ENCODE measurements at regions of chr12 and their contacts with region 1.

Region 1: DNA sequence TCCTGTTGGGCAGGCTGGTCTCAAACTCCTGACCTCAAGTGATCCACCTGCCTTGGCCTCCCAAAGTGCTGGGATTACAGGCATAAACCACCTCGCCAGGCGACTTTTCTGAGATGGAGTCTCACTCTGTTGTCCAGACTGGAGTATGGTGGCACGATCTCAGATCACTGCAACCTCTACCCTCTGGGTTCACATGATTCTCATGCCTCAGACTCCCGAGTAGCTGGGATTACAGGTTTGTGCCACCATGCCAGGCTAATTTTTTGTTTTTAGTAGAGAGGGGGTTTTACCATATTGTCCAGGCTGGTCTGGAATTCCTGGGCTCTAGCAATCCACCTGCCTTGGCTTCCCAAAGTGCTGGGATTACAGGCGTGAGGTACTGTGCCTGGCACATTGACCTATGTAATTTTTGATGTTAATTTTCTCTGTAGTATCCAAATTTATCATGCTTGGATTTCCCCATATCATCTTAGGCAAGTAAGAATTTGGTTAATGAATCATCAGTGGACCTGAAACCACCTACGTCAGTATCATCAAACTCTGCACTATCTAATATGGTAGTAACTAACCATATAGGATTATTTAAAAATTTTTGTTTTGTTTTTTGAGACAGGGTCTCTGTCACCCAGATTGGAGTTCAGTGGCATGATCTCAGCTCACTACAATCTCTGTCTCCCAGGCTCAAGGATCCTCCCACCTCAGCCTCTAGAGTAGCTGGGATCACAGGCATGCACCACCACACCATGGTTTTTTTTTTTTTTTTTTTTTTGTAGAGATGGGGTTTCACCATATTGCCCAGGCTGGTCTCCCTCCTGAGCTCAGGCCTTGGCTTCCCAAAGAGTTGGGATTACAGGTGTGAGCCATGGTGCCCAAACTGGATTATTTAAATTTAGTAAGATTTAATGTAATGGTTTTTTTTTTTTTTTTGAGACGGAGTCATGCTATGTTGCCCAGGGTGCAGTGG is 11.9 kb upstream of the ATP5F1B start:
- DNase-seq: no peak
- ATAC-seq: peak; percentile 94
- H3K4me3 Mint-ChIP-seq: no peak overlapping the region
- H3K27ac Mint-ChIP-seq: peak overlapping the region; percentile 72
- H3K4me1 Mint-ChIP-seq: peaks cover 16% of the 10 kb centered on the region
- H3K27me3 Mint-ChIP-seq: no peaks in the 10 kb centered on the region

Region 2: GRCh38 chr12:56062996-56063395 is 594.7 kb before region 1 on chr12:
- CTCF ChIA-PET with region 1: no interaction called
- POLR2A ChIA-PET with region 1: no interaction called
- intact Hi-C with region 1: no loop called
- DNase-seq: no peak
- ATAC-seq: no peak
- H3K4me3 Mint-ChIP-seq: no peak overlapping the region
- H3K27ac Mint-ChIP-seq: no peak overlapping the region
- H3K4me1 Mint-ChIP-seq: peaks cover 3% of the 10 kb centered on the region
- H3K27me3 Mint-ChIP-seq: peaks cover 4% of the 10 kb centered on the region

Region 3: GRCh38 chr12:56178347-56178746 is 479.4 kb before region 1 on chr12:
- CTCF ChIA-PET with region 1: no interaction called
- POLR2A ChIA-PET with region 1: no interaction called
- intact Hi-C with region 1: no loop called
- DNase-seq: no peak
- ATAC-seq: no peak
- H3K4me3 Mint-ChIP-seq: no peak overlapping the region
- H3K27ac Mint-ChIP-seq: no peak overlapping the region
- H3K4me1 Mint-ChIP-seq: no peaks in the 10 kb centered on the region
- H3K27me3 Mint-ChIP-seq: no peaks in the 10 kb centered on the region

Region 4: DNA sequence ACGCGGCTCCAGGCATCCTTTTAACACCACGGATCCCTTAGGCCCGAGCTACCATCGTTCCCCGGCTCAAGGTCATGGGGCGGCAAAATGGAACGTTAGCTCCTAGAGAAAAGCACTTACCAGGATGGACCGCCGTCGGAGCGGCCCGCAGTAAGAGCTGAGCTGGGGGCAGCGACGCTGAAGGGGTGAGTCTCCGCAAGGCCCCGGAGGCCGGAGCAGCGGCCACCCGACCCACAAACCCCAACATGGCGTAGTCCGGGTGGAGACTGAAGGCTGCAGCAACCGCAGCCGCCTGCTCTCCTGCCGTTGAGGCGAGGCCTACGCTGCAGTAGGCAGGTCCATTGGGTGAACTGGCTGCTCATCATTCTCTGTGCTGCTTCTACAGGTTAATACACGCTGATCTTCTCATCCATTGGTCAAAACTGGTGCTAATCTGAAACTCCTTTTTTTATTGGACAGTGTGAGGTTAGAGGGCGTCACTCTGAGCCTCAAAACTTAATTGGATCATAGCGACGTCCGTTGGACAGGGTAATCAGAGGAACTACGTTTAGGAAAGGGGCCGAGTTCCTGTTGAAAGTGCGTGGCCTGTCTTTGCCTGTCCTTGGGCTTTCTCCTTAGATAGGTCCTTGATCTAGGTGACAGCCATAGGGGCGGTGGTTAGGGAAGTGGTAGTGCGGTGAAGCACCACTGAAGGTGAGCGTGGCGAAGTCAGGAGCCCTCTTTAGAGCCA is 11.8 kb before region 1 on chr12 and contains the start of gene ATP5F1B:
- CTCF ChIA-PET with region 1: interaction called, 5 read pairs
- POLR2A ChIA-PET with region 1: interaction called, 3 read pairs
- intact Hi-C with region 1: loop called (anchors 1 to 2 kb)
- DNase-seq: peak; percentile 95
- ATAC-seq: peak; percentile 99
- H3K4me3 Mint-ChIP-seq: peak within 1 kb of the TSS; percentile 95
- H3K27ac Mint-ChIP-seq: peak within 1 kb of the TSS; percentile 95
- H3K4me1 Mint-ChIP-seq: peaks cover 30% of the 10 kb centered on the region
- H3K27me3 Mint-ChIP-seq: no peaks in the 10 kb centered on the region
- total RNA-seq, gene ATP5F1B: 756 to 818 TPM

Region 5: GRCh38 chr12:56908136-56908535 is 250.4 kb after region 1 on chr12:
- CTCF ChIA-PET with region 1: no interaction called
- POLR2A ChIA-PET with region 1: no interaction called
- intact Hi-C with region 1: no loop called
- DNase-seq: no peak
- ATAC-seq: no peak
- H3K4me3 Mint-ChIP-seq: no peak overlapping the region
- H3K27ac Mint-ChIP-seq: no peak overlapping the region
- H3K4me1 Mint-ChIP-seq: no peaks in the 10 kb centered on the region
- H3K27me3 Mint-ChIP-seq: peaks cover 12% of the 10 kb centered on the region